K562 (cell line): ENCODE measurements at regions of chr7 and their contacts with region 1.

Region 1: GRCh38 chr7:135509903-135510602 is at the start of gene CNOT4:
- DNase-seq: peak; percentile 99
- ATAC-seq: peak; percentile 93
- H3K4me3 ChIP-seq: peak within 1 kb of the TSS; percentile 70
- H3K27ac ChIP-seq: peak within 1 kb of the TSS; percentile 94
- H3K4me1 ChIP-seq: peaks cover 10 to 11% of the 10 kb centered on the region in 2 experiments; a peak in 4 of 5 replicates
- H3K27me3 ChIP-seq: no peaks in the 10 kb centered on the region
- CTCF ChIP-seq: no peak; a peak in 1 of 6 replicates
- EP300 ChIP-seq: no peak
- POLR2A ChIP-seq: peak; percentile 97
- RAD21 ChIP-seq: no peak; a peak in 1 of 4 replicates
- polyA plus RNA-seq, gene CNOT4: 12.6 to 24.1 TPM

Region 2: DNA sequence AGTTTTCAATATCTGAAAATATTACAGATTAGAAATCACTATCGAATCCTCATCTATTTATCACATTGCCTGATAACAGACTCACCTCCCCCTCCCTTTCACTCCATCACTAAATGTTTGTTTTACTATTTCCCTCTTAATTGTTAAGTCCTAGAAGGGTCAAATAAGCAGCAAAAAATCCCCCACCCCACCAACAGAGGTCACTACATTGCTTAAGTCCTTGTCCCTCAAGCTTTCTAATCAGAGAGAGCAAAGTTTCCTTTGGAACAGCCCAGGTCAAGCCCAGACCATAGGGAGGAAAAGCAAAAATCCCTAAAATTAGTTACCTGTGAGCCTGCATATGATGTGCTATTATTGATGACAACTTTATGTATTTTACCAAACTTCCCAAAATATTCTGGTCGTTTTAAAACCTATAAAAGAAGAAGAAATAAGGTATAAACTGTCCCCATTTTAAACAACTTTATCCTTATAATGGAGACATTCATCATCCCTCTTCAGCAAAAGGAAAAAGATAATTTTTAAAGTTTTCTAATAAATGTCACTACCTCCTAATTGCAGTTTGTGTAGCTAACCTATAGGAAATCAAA is 95.1 kb before region 1 on chr7:
- CTCF ChIA-PET with region 1: interaction called, 6 read pairs
- POLR2A ChIA-PET with region 1: interaction called, 3 read pairs
- in situ Hi-C with region 1: no loop called
- intact Hi-C with region 1: loop called (anchors 1 kb)
- DNase-seq: peak; percentile 67 to 88 (median 76)
- ATAC-seq: peak; percentile 99
- H3K4me3 ChIP-seq: no peak overlapping the region
- H3K27ac ChIP-seq: no peak overlapping the region
- H3K4me1 ChIP-seq: peaks cover 0 to 5% of the 10 kb centered on the region in 2 experiments; a peak in 2 of 5 replicates
- H3K27me3 ChIP-seq: no peaks in the 10 kb centered on the region
- CTCF ChIP-seq: peak; percentile 74 to 92 (median 90)
- EP300 ChIP-seq: no peak
- POLR2A ChIP-seq: no peak
- RAD21 ChIP-seq: peak; percentile 70 to 88

Region 3: DNA sequence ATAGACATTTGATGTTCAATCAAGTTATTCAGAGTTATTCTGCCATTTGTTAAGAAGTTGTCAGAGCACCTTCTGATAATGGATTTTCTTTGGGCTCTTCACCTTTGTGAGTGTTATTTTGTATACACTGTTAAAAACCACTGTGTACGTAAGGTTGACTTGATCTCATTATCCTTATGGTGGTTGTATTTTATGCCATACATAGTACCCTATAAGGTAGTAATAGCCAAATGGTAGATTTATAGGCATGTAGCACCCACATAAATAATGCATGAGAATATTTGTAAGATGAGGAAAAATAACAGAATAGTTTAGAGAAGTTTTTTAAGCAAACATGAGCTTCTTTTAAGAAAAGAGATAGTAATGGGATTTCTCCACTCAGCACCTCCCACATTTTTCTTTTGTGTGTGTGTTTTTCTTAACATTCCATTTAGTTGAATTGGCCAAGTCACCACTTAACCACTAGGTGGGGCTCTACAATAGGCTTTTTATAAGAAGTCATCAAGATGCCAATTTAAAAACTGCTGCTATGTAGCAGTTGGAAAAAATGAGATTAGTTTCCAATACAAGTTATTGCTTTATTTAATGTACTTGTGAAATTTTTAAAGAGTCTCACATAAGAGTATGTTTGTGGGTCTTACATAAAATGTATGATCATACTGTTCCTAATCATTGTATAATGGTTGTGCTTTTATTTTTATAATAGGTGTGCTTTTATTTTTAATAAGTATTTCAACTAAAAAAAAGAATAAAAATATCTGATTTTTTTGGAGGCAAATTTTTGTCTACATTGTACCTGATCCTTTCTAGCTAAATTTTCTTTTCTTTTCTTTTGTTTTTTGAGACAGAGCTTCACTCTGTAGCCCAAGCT is 111.2 kb after region 1 on chr7:
- CTCF ChIA-PET with region 1: no interaction called
- POLR2A ChIA-PET with region 1: interaction called, 3 read pairs
- in situ Hi-C with region 1: no loop called
- intact Hi-C with region 1: loop called (anchors 1 kb)
- DNase-seq: peak; percentile 39 to 73 (median 49)
- ATAC-seq: peak; percentile 84
- H3K4me3 ChIP-seq: no peak overlapping the region
- H3K27ac ChIP-seq: no peak overlapping the region
- H3K4me1 ChIP-seq: no peaks in the 10 kb centered on the region
- H3K27me3 ChIP-seq: no peaks in the 10 kb centered on the region
- CTCF ChIP-seq: peak; percentile 59 to 90 (median 79); a peak in 5 of 6 replicates
- EP300 ChIP-seq: no peak
- POLR2A ChIP-seq: no peak
- RAD21 ChIP-seq: peak; percentile 82 to 91

Region 4: GRCh38 chr7:135662373-135663114 is 152.5 kb after region 1 on chr7 and contains the start of gene STMP1:
- CTCF ChIA-PET with region 1: no interaction called
- POLR2A ChIA-PET with region 1: no interaction called
- in situ Hi-C with region 1: no loop called
- intact Hi-C with region 1: loop called (anchors 5 kb)
- DNase-seq: peak; percentile 98 to 100 (median 99)
- ATAC-seq: peak; percentile 87
- H3K4me3 ChIP-seq: peak within 1 kb of the TSS; percentile 82
- H3K27ac ChIP-seq: peak within 1 kb of the TSS; percentile 85
- H3K4me1 ChIP-seq: peaks cover 22 to 33% of the 10 kb centered on the region in 2 experiments
- H3K27me3 ChIP-seq: no peaks in the 10 kb centered on the region
- CTCF ChIP-seq: peak; percentile 74 to 81 (median 77); a peak in 5 of 6 replicates
- EP300 ChIP-seq: peak; percentile 58
- POLR2A ChIP-seq: peak; percentile 99
- RAD21 ChIP-seq: peak; percentile 56 to 64
- polyA plus RNA-seq, gene STMP1: 175 to 249 TPM

Region 5: GRCh38 chr7:137169282-137169698 is 1659.2 kb after region 1 on chr7:
- CTCF ChIA-PET with region 1: no interaction called
- POLR2A ChIA-PET with region 1: no interaction called
- in situ Hi-C with region 1: no loop called
- intact Hi-C with region 1: loop called (anchors 10 kb)
- DNase-seq: peak in 1 of 4 experiments; percentile 37
- ATAC-seq: peak; percentile 63
- H3K4me3 ChIP-seq: no peak overlapping the region
- H3K27ac ChIP-seq: no peak overlapping the region
- H3K4me1 ChIP-seq: no peaks in the 10 kb centered on the region
- H3K27me3 ChIP-seq: no peaks in the 10 kb centered on the region
- CTCF ChIP-seq: peak in 2 of 3 experiments; percentile 34 to 35; a peak in 2 of 6 replicates
- EP300 ChIP-seq: no peak
- POLR2A ChIP-seq: no peak
- RAD21 ChIP-seq: peak; percentile 45 to 48